GM10248 (cell line): ENCODE measurements at regions of chr3 and their contacts with region 1.

Region 1: DNA sequence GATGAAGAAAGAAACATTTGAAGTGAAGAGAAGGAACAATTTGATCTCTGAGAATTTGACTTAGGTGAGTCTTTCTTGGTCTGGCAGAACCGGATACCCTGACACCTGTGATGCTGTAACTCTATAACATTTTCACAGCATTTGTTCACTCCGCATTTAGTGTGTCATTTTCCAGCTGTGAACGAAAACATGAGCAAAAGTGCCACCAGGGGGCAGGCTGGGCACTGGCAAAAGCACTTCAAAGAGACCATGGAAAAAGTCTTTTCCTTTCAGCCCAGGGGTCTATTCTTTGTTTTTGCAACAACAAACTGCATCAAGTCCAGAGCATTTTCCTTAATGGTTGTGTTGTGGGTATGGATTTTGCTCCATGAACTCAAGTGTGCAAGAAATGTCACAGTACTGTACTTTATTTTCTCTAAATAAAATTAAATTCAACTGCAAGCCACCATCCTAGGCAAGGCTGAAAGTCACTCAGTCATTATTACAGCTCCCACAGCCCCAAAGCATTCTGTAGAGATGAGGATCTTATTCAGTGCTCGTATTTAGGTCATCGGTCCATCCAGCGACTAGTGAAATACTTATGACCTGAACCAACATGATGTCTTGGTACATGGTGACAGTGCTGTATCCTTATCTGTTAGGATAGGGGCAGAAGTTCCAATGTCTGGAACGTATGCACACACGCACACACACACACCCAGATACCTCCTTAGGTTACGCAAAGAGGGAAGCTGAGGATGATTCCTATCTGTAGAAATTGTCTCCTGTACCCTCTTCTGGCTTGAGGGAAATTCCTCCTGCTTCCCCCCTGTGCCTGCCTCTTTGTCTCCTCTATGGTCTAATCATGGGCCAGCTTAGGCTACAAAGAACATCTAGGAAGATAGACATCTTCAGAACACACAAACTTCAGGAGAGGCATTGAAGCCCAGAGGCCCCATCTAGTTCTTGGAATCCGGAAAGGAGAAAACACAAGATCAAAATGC is 125.5 kb downstream of the GADL1 start:
- DNase-seq: peak; percentile 35
- CTCF ChIP-seq: peak; percentile 80

Region 2: GRCh38 chr3:31132132-31132769 is 363.3 kb after region 1 on chr3:
- CTCF ChIA-PET with region 1: interaction called, 12 read pairs
- POLR2A ChIA-PET with region 1: no interaction called
- DNase-seq: no peak
- CTCF ChIP-seq: no peak

Region 3: DNA sequence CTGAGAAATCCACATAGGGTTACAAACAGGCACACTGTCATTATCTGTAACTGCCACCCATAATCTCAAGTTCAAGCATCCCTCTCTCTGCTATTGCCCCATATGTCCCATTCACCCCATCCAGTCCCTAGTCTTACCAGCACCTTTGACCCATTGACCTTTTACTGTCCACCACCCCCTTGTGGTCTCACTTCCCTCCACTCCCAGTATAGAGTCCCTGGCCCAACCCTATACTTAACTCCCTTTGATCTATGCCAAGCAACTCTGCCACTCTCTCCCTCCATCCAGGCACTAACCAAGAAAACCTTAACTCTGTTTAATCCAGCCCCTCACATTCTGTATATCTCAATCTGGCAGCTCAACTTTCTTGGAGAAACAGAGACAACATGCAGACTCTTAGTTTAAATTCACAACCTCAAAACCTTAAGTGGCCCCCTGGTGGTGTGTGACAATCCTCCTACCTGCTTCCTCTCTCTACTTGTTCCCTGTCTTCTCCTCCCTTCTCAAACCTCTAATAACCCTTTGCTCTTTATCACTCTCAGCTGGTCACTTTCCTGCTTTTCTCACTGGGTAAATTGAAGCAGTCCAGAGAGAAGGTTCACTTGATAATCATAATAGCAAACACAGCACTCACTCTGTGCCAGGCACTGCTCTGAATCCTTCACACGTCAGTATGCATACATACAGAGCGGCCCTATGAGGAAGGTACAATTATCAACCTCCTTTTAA is 926.5 kb after region 1 on chr3:
- CTCF ChIA-PET with region 1: interaction called, 12 read pairs
- POLR2A ChIA-PET with region 1: no interaction called
- DNase-seq: peak; percentile 31
- CTCF ChIP-seq: peak; percentile 33

Region 4: DNA sequence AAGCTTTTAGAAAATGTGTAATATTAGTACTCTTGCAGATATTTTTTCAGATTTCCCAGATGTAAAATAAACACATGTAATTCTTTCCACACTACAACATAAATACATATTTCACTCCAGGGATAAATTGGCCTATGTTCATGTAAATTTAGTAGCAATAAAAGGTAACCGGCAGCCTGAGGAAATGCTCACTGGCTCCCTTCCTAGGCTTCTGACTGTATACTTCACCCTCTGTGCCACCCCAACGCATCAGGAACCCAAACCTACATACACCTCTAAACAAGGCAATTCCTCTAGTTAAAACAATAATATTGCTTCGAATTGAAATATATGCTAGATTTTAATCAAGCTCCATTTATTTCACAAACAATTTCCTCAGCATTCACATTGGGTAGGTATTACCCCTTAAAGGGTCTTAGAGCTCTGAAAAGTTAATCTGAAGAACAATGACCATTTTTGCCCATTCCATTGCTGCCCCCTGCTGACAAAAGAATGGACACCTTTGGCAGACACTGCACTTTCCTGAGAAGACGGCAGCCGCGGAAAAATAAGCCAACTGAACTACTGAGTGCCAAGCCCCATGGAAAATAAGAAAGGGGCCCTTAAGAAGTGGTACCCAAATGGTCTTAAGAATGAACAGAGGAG is 999.6 kb after region 1 on chr3:
- CTCF ChIA-PET with region 1: interaction called, 20 read pairs
- POLR2A ChIA-PET with region 1: no interaction called
- DNase-seq: no peak
- CTCF ChIP-seq: peak; percentile 49